Activated B cell treated with CpG ODN at 0.5 μM for 24 hours (primary cell): ENCODE measurements at regions of chr18 and their contacts with region 1.

Region 1: GRCh38 chr18:8912348-8913326 is 189.9 kb upstream of the NDUFV2 start:
- DNase-seq: peak; percentile 35
- ATAC-seq: peak; percentile 69
- H3K4me3 Mint-ChIP-seq: peak overlapping the region; percentile 79
- H3K27ac Mint-ChIP-seq: peak overlapping the region; percentile 100
- H3K4me1 Mint-ChIP-seq: peaks cover 64% of the 10 kb centered on the region
- H3K27me3 Mint-ChIP-seq: no peaks in the 10 kb centered on the region
- CTCF ChIP-seq: no peak

Region 2: DNA sequence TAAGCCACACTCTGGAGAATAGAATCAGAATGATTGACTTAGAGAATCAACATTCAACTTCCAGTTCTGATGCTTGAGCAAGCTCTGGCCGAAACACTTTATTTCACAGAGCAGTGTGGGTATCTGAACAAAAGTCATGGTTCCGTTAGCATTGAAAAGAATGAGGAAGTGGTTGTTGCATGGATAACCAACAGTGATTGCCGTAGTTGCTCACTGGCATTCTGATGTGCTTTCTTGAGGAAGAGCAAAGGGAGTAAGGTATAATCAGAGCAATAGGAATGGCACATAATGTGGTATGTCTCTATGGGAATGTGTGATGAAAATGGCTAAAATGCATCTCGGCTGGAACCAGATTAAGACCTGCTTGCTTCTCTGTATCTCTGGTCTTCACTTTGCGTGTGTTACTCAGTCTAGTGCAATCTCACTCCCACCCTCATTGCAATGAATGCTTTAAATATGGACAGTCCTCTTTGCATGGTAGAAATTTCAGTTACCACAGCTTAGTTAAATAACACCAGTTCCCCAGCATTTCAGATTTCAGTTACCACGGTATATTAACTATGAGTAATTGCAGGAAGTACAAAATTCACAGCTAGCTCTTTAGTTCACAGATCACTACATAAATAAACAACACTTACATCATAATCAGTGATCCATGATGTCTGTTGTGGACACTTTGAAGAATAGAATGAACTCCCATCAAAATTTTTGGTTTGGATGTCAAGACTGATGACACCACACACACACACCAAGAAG is 311.2 kb before region 1 on chr18:
- CTCF ChIA-PET with region 1: no interaction called
- POLR2A ChIA-PET with region 1: no interaction called
- intact Hi-C with region 1: loop called (anchors 5 kb)
- DNase-seq: no peak
- ATAC-seq: peak; percentile 75
- H3K4me3 Mint-ChIP-seq: peak overlapping the region; percentile 40
- H3K27ac Mint-ChIP-seq: peak overlapping the region; percentile 87
- H3K4me1 Mint-ChIP-seq: peaks cover 57% of the 10 kb centered on the region
- H3K27me3 Mint-ChIP-seq: no peaks in the 10 kb centered on the region
- CTCF ChIP-seq: no peak

Region 3: DNA sequence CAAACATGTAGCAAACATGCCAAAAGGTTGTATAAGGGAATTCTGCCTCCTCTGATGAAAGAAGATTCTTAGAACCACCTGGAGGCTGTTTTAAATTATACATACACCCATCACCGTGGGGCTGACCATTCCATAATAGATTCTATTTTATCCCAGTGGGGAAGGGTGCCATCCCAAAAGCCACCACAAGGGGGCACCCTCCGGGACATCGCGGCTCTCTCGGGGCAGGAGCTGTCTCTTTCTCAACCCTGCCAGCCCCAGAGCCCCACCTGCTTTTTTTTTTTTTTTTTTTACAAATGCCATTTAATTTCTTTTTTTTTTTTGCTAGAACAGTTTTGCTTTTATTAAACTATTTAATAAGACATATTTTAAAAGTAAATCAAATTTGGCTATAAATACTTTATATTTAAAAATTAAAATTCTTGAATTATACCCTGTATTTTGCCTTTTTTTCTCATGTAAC is 215.9 kb before region 1 on chr18:
- CTCF ChIA-PET with region 1: no interaction called
- POLR2A ChIA-PET with region 1: interaction called, 4 read pairs
- intact Hi-C with region 1: loop called (anchors 2 kb)
- DNase-seq: peak; percentile 74
- ATAC-seq: peak; percentile 82
- H3K4me3 Mint-ChIP-seq: no peak overlapping the region
- H3K27ac Mint-ChIP-seq: no peak overlapping the region
- H3K4me1 Mint-ChIP-seq: peaks cover 12% of the 10 kb centered on the region
- H3K27me3 Mint-ChIP-seq: no peaks in the 10 kb centered on the region
- CTCF ChIP-seq: peak; percentile 62

Region 4: DNA sequence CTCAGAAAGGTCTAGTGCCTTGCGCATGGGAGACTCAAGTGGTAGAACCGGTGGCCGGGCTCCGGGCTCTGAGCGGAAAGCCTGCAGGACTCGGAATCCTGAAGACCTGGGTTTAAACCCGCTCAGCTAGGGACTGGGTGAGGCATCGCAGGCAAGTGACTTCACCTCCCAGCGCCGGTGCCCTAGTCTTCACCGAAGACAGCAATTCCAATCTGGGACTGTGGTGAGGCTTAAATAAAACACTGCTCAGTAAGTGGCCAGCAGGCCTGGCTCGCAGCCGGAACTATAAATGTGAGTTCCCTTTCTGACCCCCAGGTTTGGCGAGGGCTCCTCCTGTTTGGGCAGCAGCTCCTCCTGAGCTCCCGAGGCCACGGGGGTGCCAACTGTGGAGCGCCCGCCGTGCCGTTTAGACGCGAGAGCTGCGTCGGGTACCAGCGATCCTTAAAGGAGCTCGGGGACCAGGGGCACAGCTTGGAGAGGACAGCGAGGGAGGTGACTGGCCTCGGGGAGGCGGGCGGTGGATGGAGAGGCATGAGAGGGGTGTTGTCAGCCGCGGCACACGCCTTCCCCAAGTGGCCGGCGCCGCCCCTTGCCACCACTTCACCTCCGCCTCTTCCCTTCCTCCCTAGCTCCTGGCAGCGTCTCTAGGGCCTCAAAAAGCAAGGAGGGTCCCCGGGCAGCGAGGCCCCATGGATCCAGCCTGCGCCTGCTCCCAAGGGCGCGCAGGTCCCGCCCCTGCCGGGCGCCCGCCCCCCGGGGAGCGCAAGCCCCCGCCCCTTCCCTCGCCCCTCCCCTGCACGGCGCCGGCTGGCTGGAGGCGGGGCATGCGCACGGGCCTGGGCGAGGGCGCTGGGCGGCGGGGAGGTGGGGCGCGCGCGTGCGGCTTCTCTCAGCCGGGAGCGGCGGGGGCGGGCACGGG is 208.0 kb before region 1 on chr18:
- CTCF ChIA-PET with region 1: no interaction called
- POLR2A ChIA-PET with region 1: no interaction called
- intact Hi-C with region 1: loop called (anchors 2 kb)
- DNase-seq: peak; percentile 89
- ATAC-seq: peak; percentile 92
- H3K4me3 Mint-ChIP-seq: peak overlapping the region; percentile 89
- H3K27ac Mint-ChIP-seq: peak overlapping the region; percentile 41
- H3K4me1 Mint-ChIP-seq: peaks cover 26% of the 10 kb centered on the region
- H3K27me3 Mint-ChIP-seq: peaks cover 14% of the 10 kb centered on the region
- CTCF ChIP-seq: no peak

Region 5: DNA sequence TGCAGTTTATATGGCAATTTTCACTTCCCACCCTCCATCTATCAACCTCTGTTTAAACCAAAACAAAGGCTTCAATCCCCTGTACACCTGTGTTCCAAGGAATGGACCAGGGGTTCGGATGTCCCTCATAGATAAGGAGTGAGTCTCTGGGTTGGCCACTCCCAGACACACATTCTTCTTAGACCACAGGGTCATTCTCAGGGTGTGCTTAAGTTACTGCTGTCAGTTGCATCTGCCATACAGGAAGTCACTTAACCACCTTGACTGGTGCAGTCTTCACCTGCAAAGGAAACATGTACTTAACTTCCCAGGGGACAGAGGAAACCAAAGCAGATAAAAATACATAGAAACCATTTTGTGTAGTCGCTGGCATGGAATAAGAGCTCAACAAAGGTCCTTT is 38.9 kb after region 1 on chr18:
- CTCF ChIA-PET with region 1: no interaction called
- POLR2A ChIA-PET with region 1: no interaction called
- intact Hi-C with region 1: loop called (anchors 5 kb)
- DNase-seq: no peak
- ATAC-seq: peak; percentile 83
- H3K4me3 Mint-ChIP-seq: peak overlapping the region; percentile 17
- H3K27ac Mint-ChIP-seq: peak overlapping the region; percentile 46
- H3K4me1 Mint-ChIP-seq: peaks cover 72% of the 10 kb centered on the region
- H3K27me3 Mint-ChIP-seq: no peaks in the 10 kb centered on the region
- CTCF ChIP-seq: no peak

Region 6: DNA sequence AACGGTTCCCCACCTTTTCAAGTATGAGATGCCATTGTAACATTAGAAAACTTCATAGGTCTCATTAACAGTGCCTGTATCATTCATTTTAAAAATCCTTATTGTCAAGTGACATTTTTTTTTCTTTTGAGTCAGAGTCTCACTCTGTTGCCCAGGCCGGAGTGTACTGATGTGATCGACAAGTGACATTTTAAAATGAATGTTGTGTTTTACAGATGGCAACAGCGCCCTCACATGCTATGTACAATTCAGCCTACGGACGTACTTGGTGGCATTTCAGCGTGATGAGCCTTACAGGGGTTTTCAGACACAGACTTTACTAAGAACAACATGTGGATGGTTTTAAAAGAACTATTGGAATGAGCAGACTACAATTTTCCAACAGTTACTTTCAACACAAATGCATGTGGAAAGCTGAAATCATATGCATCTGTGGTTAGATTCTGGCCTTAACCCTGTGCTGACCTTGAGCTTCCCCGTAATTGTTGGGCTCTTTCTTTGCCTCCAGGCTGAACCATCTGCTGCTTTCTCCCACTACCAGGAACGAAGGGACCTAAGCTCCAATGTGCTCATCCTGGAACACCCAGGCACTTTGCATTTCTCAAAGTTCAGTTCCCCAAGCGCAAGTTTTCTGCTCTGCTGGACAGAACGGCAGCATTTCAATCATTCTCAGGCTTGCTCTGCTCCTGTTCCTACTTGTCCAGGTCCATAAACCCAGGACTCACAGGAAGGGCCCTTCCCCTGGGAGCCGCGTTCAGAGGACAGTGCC is 70.0 kb after region 1 on chr18:
- CTCF ChIA-PET with region 1: no interaction called
- POLR2A ChIA-PET with region 1: no interaction called
- intact Hi-C with region 1: loop called (anchors 5 kb)
- DNase-seq: no peak
- ATAC-seq: peak; percentile 65
- H3K4me3 Mint-ChIP-seq: no peak overlapping the region
- H3K27ac Mint-ChIP-seq: no peak overlapping the region
- H3K4me1 Mint-ChIP-seq: peaks cover 20% of the 10 kb centered on the region
- H3K27me3 Mint-ChIP-seq: no peaks in the 10 kb centered on the region
- CTCF ChIP-seq: no peak